Psoas muscle (tissue), 8 donors: ENCODE measurements at regions of chr10 and their contacts with region 1.

Region 1: DNA sequence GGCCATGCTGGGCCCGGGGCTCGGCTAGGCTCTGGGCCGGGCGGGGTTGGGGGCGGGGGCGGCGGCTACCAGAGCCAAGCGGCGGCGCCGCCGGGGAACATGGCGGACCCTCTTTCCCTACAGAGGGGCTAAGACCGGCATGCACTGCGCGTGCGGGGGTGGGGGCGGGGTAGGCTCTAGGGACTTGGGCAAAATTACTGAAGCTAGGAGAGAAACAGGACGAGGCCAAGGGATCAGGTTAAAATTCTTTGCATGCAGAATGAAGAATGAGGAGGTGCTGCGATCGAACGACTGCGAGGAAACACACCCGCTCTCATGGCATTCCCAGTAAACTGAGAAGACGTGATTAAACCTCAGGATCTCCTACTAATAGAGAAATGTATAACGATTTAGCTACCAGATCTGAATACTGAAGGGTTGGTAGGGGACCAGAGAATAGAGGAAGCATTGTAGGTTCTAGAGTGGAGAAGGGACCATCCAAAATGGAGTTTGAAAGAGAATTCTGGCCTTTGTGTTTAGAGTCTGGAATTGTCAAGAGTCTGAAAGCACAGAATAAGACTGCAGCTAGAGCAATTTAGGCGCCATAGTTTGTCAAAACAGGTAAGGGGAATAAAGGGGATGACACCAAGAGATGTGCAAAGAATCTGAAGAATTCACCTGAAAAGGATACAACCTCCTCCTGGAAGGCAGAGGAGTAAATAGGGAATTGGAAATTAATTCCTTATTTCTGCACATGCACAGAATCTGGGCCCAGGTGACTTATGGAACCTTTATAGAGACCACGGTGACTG is at the start of gene PPP3CB:
- DNase-seq: peak; percentile 93 to 94
- ATAC-seq: peak; percentile 74 to 86 (median 84)
- H3K4me3 ChIP-seq: peak within 1 kb of the TSS; percentile 90
- H3K27ac ChIP-seq: peak within 1 kb of the TSS; percentile 96
- H3K4me1 ChIP-seq: peaks cover 40% of the 10 kb centered on the region
- H3K27me3 ChIP-seq: no peaks in the 10 kb centered on the region
- CTCF ChIP-seq: no peak
- total RNA-seq, gene PPP3CB: 92.3 to 177 (median 138) TPM

Region 2: DNA sequence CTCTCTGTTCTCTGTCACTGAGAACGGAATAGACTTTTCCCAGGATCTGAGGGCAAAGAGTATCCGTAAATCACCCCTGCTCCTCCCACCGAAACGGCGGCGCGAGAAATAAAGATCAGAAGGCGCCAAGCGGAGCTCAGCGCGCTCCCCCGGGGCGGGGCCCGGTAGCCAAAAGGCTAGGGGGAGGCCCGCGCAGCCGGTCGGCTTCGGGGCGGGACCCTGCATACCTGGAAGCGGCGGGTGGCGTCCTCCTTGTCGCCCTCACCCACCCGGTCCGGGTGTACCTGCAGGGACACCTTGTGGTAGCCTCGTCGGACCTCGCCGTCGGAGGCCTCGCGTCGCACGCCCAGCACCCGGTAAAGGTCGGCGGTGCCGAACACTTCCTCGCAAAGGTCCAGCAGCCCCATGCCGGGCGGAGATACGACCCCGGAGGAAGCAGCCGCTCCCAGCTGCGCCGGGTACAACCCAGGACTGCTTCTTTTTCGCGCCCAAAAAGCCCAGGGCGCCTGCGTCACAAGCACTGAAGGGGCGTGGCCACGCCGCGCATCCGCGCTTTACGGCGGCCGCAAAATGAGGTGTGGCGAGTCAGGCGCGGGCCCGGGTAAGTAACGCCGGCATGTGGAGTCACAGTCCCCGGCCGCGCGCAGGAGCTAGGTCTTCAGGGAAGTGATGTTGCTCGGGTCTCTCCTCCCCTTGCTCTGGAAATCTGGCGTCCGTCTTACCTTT is 249.1 kb before region 1 on chr10 and contains the start of gene DNAJC9:
- intact Hi-C with region 1: loop called in 1 of 2 experiments (anchors 5 kb)
- DNase-seq: peak; percentile 98
- ATAC-seq: peak; percentile 97 to 98 (median 98)
- H3K4me3 ChIP-seq: peak within 1 kb of the TSS; percentile 82
- H3K27ac ChIP-seq: peak within 1 kb of the TSS; percentile 85
- H3K4me1 ChIP-seq: peaks cover 34% of the 10 kb centered on the region
- H3K27me3 ChIP-seq: no peaks in the 10 kb centered on the region
- CTCF ChIP-seq: no peak
- total RNA-seq, gene DNAJC9: 6.6 to 11.2 (median 8.6) TPM

Region 3: GRCh38 chr10:73413528-73414229 is 82.4 kb before region 1 on chr10 and contains the start of gene ANXA7:
- intact Hi-C with region 1: loop called in 1 of 2 experiments (anchors 5 kb)
- DNase-seq: peak; percentile 95 to 96
- ATAC-seq: peak; percentile 91 to 96 (median 94)
- H3K4me3 ChIP-seq: peak within 1 kb of the TSS; percentile 79
- H3K27ac ChIP-seq: peak within 1 kb of the TSS; percentile 95
- H3K4me1 ChIP-seq: peaks cover 35% of the 10 kb centered on the region
- H3K27me3 ChIP-seq: no peaks in the 10 kb centered on the region
- CTCF ChIP-seq: peak; percentile 21
- total RNA-seq, gene ANXA7: 134 to 205 (median 161) TPM

Region 4: DNA sequence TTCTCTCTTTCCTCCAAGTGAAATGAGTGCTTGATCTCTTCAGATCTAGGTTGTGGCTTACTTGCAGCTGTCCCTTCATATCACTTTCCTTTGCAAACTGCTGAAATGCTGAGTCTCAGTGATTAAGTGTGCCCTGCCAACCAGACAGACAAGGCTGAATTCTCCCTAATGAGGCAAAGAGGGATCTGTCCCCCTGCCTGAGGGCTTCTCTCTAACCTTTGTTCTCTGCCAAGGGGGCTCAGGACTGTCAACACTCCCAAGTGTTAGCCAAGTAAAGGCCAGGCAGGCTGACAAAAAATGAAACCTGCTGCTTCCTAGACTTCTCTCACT is 62.6 kb before region 1 on chr10 and contains the start of gene MSS51:
- intact Hi-C with region 1: loop called in 1 of 2 experiments (anchors 5 kb)
- DNase-seq: peak in 1 of 2 donors; percentile 29
- ATAC-seq: peak; percentile 91 to 96 (median 94)
- H3K4me3 ChIP-seq: peak within 1 kb of the TSS; percentile 70
- H3K27ac ChIP-seq: peak within 1 kb of the TSS; percentile 78
- H3K4me1 ChIP-seq: peaks cover 27% of the 10 kb centered on the region
- H3K27me3 ChIP-seq: no peaks in the 10 kb centered on the region
- CTCF ChIP-seq: no peak
- total RNA-seq, gene MSS51: 17.0 to 253 (median 80.5) TPM

Region 5: GRCh38 chr10:73625884-73626752 is 130.0 kb after region 1 on chr10:
- intact Hi-C with region 1: no loop called
- DNase-seq: peak; percentile 90 to 96
- ATAC-seq: peak; percentile 96
- H3K4me3 ChIP-seq: peak overlapping the region; percentile 93
- H3K27ac ChIP-seq: peak overlapping the region; percentile 95
- H3K4me1 ChIP-seq: peaks cover 4% of the 10 kb centered on the region
- H3K27me3 ChIP-seq: no peaks in the 10 kb centered on the region
- CTCF ChIP-seq: no peak